ENCODE measurements at regions of chr3 and their contacts with region 1.

Region 1: GRCh38 chr3:158845765-158846350 is 44.0 kb downstream of the MFSD1 start:
- DNase-seq: peak; percentile 62
- CTCF ChIP-seq: peak; percentile 70

Region 2: DNA sequence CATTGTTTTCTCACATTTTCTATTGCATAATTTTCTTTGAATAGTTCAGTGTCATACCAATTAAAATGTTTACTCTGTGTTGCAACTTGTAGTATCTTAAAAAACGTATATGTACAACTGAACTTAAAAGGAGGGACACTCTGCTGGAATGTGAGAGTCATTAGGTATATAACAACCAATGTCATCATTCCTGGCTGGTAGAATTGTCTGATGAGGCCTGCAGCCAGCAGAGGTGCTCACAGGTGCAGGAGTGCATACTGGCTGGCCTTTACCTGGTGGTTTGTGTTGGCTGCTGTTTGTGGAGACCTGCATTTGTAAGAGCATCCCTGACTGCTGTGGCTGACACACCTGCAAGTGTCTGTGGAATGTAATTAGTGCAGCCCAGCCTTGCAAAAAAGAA is 94.5 kb before region 1 on chr3:
- CTCF ChIA-PET with region 1: no interaction called
- POLR2A ChIA-PET with region 1: no interaction called
- DNase-seq: no peak
- CTCF ChIP-seq: no peak

Region 3: GRCh38 chr3:158762701-158763100 is 83.2 kb before region 1 on chr3:
- CTCF ChIA-PET with region 1: no interaction called
- POLR2A ChIA-PET with region 1: no interaction called
- DNase-seq: no peak
- CTCF ChIP-seq: no peak

Region 4: GRCh38 chr3:158830391-158830790 is 15.5 kb before region 1 on chr3:
- CTCF ChIA-PET with region 1: interaction called, 25 read pairs
- POLR2A ChIA-PET with region 1: no interaction called
- DNase-seq: no peak
- CTCF ChIP-seq: no peak

Region 5: GRCh38 chr3:158863247-158863646 is 17.4 kb after region 1 on chr3:
- CTCF ChIA-PET with region 1: interaction called, 10 read pairs
- POLR2A ChIA-PET with region 1: no interaction called
- DNase-seq: no peak
- CTCF ChIP-seq: no peak

Region 6: GRCh38 chr3:159252772-159253384 is 407.0 kb after region 1 on chr3:
- CTCF ChIA-PET with region 1: interaction called, 146 read pairs
- POLR2A ChIA-PET with region 1: no interaction called
- DNase-seq: peak; percentile 24
- CTCF ChIP-seq: peak; percentile 54

Measured in GM10248 (cell line).